CD8-positive, alpha-beta memory T cell (primary cell): ENCODE measurements at regions of chr2 and their contacts with region 1.

Region 1: GRCh38 chr2:119823734-119824334 is 64.1 kb downstream of the PTPN4 start:
- DNase-seq: peak in 3 of 5 donors; percentile 17 to 51 (median 31)
- H3K4me3 ChIP-seq: no peak overlapping the region
- H3K4me3 Mint-ChIP-seq: no peak overlapping the region
- H3K27ac ChIP-seq: no peak overlapping the region
- H3K27ac Mint-ChIP-seq: peak overlapping the region in 6 of 8 donors; percentile 0 to 82 (median 22)
- H3K4me1 ChIP-seq: peaks cover 18% of the 10 kb centered on the region
- H3K4me1 Mint-ChIP-seq: peaks cover 53 to 75% (median 67%) of the 10 kb centered on the region in 3 donors
- H3K27me3 ChIP-seq: no peaks in the 10 kb centered on the region
- H3K27me3 Mint-ChIP-seq: no peaks in the 10 kb centered on the region

Region 2: DNA sequence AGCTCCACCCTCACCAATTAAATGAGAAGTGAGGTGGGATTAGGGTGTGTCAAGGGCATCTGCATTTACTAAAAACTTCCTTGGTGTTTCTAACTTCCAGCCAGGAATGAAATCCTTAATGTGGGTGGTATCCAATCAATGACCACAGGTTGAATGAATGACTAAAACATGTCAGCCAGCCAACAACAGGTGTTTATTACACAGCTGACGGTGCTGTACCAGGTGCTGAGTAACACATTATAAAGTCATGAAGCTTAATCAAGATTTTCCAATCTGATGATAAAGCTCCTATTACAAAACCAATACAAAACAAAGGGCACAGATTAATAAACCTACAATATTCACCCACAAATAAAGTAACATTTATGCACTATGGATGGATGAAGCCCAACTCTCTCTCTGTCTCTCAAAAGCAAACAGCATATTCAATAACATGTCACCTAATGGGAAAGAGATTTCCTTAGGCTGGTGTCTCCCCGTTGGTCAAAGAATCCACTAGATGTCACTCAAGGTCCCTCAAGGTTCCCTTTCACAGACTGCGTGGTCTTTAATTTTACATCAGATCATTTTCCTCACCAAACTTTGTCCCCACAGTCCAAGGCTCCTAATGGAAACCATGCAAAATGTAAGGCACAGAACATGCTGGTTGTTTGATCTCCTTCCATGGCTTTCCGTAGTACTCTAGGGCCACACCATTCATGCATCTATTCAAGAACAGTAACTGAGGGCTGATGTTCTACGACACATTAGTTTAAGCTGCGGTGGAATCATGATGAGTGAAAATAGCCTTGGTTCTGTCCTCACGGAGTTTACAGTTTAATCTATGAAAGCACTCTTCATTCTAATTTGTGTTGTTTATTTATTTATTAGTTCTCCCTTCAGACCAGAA is 70.5 kb before region 1 on chr2:
- CTCF ChIA-PET with region 1: interaction called, 24 read pairs
- POLR2A ChIA-PET with region 1: no interaction called
- DNase-seq: peak in 2 of 5 donors; percentile 47 to 53
- H3K4me3 ChIP-seq: no peak overlapping the region
- H3K4me3 Mint-ChIP-seq: no peak overlapping the region
- H3K27ac ChIP-seq: no peak overlapping the region
- H3K27ac Mint-ChIP-seq: no peak overlapping the region
- H3K4me1 ChIP-seq: no peaks in the 10 kb centered on the region
- H3K4me1 Mint-ChIP-seq: peaks cover 4 to 10% (median 5%) of the 10 kb centered on the region in 3 donors
- H3K27me3 ChIP-seq: no peaks in the 10 kb centered on the region
- H3K27me3 Mint-ChIP-seq: peaks cover 0 to 1% of the 10 kb centered on the region in 2 donors

Region 3: DNA sequence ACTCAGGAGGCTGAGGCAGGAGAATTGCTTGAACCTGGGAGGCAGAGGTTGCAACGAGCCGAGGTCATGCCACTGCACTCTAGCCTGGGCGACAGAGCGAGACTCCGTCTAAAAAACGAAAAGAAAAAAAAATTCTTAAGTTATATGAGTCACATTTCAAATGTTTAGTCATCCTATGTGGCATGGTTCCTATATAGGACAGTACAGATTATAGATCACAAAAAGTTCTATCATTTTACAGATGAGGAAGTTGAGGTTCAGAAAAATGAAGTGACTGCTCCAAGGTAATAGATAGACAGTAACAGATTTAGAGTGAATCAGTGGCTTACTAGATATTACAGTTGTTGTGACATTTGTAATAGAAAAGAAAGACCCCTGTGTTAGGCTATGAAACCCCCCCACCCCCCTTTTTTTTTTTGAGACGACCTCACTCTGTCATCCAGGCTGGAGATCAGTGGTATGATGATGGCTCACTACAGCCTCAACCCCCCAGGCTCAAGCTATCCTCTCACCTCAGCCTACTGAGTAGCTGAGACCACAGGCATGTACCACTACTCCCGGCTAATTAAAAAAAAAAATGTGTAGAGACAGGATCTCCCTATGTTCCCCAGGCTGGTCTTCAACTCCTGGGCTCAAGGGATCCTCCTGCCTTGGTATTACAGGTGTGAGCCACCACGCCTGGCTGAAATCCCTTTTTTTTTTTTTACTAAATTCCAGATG is 41.4 kb before region 1 on chr2:
- CTCF ChIA-PET with region 1: no interaction called
- POLR2A ChIA-PET with region 1: no interaction called
- DNase-seq: no peak
- H3K4me3 ChIP-seq: no peak overlapping the region
- H3K4me3 Mint-ChIP-seq: no peak overlapping the region
- H3K27ac ChIP-seq: no peak overlapping the region
- H3K27ac Mint-ChIP-seq: peak overlapping the region in 2 of 8 donors; percentile 3 to 26
- H3K4me1 ChIP-seq: peaks cover 15% of the 10 kb centered on the region
- H3K4me1 Mint-ChIP-seq: peaks cover 56 to 77% (median 75%) of the 10 kb centered on the region in 3 donors
- H3K27me3 ChIP-seq: no peaks in the 10 kb centered on the region
- H3K27me3 Mint-ChIP-seq: no peaks in the 10 kb centered on the region